ENCODE measurements at regions of chr6 and their contacts with region 1.

Region 1: DNA sequence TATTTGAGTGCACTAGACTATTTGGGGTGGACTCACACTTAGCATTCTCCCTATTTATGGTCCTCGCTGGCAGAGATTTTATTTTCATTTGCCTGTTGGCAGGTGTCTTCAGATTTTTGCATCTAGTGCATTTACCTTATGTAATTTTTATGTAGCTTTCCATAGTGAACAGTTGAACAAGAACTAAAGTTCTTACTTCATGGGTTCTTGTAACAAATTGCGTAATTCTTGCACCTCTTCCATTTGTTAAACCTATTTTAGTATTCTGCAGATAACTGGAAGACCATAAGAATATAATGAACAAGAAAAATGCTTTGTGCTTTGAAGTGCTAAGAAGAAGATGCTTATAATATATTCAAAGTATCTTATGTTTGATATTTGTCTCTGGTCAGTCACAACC is 252.8 kb upstream of the MMS22L start:
- DNase-seq: no peak
- ATAC-seq: no peak
- H3K4me3 Mint-ChIP-seq: no peak overlapping the region
- H3K27ac Mint-ChIP-seq: no peak overlapping the region
- H3K4me1 Mint-ChIP-seq: no peaks in the 10 kb centered on the region
- H3K27me3 Mint-ChIP-seq: peaks cover 2% of the 10 kb centered on the region

Region 2: DNA sequence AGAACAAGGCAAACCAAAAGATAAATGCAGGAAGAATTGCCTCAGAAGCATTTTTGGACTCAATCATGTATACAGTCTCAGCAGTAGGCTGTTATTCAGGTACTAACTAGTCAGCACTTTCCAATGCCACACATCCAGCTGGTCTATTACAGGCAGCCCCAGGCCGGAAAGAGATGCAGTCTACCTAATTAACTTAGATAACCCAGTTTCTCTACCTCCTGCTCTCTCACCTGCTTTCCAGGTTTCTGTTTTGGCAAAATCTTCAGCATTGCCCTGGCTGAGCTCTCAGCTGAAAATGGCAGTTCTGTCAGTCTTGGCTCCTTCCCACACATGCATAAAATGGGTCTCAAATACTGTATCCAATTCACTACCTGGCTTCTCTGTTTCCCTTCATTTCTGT is 1115.5 kb before region 1 on chr6:
- CTCF ChIA-PET with region 1: no interaction called
- POLR2A ChIA-PET with region 1: no interaction called
- intact Hi-C with region 1: loop called in 1 of 2 experiments (anchors 10 kb)
- DNase-seq: no peak
- ATAC-seq: no peak
- H3K4me3 Mint-ChIP-seq: no peak overlapping the region
- H3K27ac Mint-ChIP-seq: no peak overlapping the region
- H3K4me1 Mint-ChIP-seq: no peaks in the 10 kb centered on the region
- H3K27me3 Mint-ChIP-seq: peaks cover 3% of the 10 kb centered on the region

Measured in activated CD4-positive, alpha-beta T cell treated with anti-CD3 and anti-CD28 coated beads for 36 hours (primary cell).